Activated T-helper 1 cell treated with anti-CD3 and anti-CD28 coated beads, Interleukin-12 subunit alpha, Interleukin-12 subunit beta, Interleukin-2, Interleukin-4 antibody, amounts not matched to agents 30 ng/mL and 10 ng/mL and 1 ng/mL, durations not matched to agents 14 hours and 24 hours and 36 hours (primary cell): ENCODE measurements at regions of chr10 and their contacts with region 1.

Region 1: GRCh38 chr10:69327463-69328379 is 49.4 kb downstream of the HK1 start:
- DNase-seq: no peak
- H3K4me3 Mint-ChIP-seq: peak overlapping the region; percentile 74
- H3K27ac Mint-ChIP-seq: peak overlapping the region; percentile 69
- H3K4me1 Mint-ChIP-seq: peaks cover 48% of the 10 kb centered on the region
- H3K27me3 Mint-ChIP-seq: no peaks in the 10 kb centered on the region

Region 2: DNA sequence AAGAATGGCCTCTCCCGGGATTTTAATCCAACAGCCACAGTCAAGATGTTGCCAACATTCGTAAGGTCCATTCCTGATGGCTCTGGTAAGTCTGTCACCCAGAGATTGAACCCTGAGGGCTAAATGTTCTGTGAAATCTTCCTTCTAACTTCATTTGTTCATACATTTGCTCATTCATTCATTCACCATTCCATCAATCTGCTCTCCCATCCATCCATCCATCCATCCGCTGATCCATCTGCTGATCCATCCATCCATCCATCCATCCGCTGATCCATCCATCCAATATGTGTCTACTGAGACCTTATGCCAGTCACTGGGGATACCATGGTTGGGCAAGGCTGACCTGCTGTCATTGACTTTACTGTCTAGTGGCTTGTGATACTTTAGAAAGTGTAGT is 16.2 kb after region 1 on chr10:
- intact Hi-C with region 1: loop called (anchors 2 kb)
- DNase-seq: no peak
- H3K4me3 Mint-ChIP-seq: no peak overlapping the region
- H3K27ac Mint-ChIP-seq: peak overlapping the region; percentile 65
- H3K4me1 Mint-ChIP-seq: peaks cover 71% of the 10 kb centered on the region
- H3K27me3 Mint-ChIP-seq: no peaks in the 10 kb centered on the region